HEK293 (cell line): ENCODE measurements at regions of chr2 and their contacts with region 1.

Region 1: DNA sequence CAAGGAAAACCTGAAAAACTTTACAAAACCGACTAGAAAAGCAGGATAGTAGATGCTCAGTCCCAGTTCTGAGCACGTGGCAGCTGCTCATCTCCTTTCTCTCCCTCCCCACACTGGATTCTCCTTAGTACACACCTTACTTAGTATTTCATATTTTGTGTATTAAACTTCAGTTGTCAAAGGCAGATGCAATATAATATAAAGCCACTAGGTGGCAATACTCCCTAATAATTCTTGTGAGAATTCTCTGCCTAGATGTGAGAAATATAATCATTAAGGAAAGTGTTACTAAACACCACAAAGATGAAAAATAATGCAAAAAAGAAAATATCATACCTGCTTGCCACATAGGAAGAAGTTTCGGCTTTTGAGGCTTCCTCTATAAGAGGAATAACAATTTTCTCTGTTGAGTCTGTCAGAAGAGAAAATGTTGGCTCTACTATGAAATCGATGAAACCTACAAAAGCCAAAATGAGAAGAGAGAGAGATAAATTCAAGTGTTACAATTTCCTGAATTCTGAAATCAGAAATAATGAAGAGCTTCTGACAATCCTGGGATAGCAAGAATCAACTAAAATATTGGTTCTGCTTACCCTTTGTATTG is 200.6 kb downstream of the PPP1R1C start:
- H3K4me3 ChIP-seq: no peak overlapping the region
- H3K27ac ChIP-seq: no peak overlapping the region
- H3K4me1 ChIP-seq: no peaks in the 10 kb centered on the region
- CTCF ChIP-seq: peak; percentile 59; the same call in 1 of the 2 replicates

Region 2: GRCh38 chr2:182097571-182098164 is 88.6 kb before region 1 on chr2:
- CTCF ChIA-PET with region 1: no interaction called
- POLR2A ChIA-PET with region 1: no interaction called
- H3K4me3 ChIP-seq: no peak overlapping the region
- H3K27ac ChIP-seq: no peak overlapping the region
- H3K4me1 ChIP-seq: no peaks in the 10 kb centered on the region
- CTCF ChIP-seq: no peak

Region 3: DNA sequence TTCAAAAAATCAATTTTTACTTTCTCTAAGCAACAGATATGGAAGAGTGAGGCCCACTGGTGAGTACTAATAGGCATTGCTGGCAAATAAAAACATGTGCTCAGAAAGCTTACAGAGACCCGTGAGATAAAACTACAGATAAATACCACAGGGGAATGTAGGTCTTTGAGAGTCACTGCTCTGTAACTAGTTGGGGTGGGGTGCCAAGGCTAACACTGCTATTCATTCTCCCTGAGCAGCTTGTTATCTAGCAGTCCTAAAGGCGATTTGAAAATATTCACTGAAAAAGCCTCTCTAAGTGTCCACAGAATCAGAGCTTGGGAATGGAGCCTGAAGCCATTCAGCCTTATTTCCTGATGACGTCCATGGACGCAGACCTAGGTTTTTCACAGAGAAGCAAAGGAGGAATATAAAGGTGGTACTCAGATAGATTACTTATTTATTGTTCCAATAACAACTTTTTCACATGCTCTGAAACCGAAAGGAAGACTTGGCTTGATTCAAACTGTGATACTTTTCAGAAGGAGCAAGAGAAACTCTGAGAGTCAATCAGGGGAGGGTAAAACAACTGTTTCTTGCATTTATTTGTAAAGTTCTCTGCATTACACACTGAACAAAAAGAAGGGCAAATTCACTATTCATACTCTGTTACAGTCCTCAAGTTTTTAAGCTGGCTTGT is 12.2 kb before region 1 on chr2:
- CTCF ChIA-PET with region 1: interaction called, 14 read pairs
- POLR2A ChIA-PET with region 1: no interaction called
- H3K4me3 ChIP-seq: no peak overlapping the region
- H3K27ac ChIP-seq: no peak overlapping the region
- H3K4me1 ChIP-seq: no peaks in the 10 kb centered on the region
- CTCF ChIP-seq: no peak